Mammary epithelial cell (primary cell): ENCODE measurements at regions of chr2 and their contacts with region 1.

Region 1: DNA sequence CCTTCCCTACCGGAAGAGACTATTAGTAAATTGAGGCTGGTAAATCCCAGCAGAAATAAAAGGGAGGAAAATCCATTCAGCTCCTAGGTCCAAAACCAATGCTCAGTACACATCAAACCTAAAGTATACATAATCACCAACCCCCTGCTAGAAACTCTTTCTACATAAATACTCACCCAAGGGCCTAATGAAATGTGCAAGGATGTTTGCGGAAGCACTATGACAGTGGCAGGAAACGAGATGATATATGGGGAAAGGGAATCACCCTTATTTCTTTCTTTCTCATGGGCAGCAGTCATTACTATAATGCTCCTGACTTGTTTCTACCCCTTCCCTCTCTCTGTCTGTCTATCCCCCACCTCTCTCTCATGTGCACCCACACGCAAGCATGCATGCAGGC is 1.3 kb upstream of the SCTR start:
- DNase-seq: no peak
- H3K4me3 ChIP-seq: no peak overlapping the region
- H3K27ac ChIP-seq: no peak overlapping the region
- H3K4me1 ChIP-seq: no peaks in the 10 kb centered on the region
- H3K27me3 ChIP-seq: peaks cover 24% of the 10 kb centered on the region
- CTCF ChIP-seq: no peak

Region 2: DNA sequence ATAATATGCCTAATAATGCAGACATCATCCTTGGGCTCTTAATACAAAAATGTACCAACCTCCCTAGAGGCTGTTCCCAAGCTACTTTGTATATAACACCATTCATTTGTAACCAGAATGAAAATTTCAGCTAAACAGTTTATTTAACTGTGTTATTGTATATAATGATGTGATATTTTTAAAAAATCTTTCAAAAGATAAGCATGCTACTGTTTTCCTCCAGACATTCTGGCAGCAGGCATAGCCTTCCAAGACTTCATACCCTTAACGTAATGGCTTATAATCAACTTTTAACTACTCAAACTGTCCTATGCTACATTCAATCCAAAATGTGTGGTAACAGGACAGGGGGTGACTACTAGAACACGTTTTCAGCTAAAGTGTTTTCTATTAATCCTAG is 39.9 kb after region 1 on chr2:
- CTCF ChIA-PET with region 1: no interaction called
- dilution Hi-C with region 1: loop called (anchors 5 kb)
- in situ Hi-C with region 1: no loop called
- intact Hi-C with region 1: no loop called
- DNase-seq: no peak
- H3K4me3 ChIP-seq: no peak overlapping the region
- H3K27ac ChIP-seq: no peak overlapping the region
- H3K4me1 ChIP-seq: no peaks in the 10 kb centered on the region
- H3K27me3 ChIP-seq: no peaks in the 10 kb centered on the region
- CTCF ChIP-seq: no peak

Region 3: GRCh38 chr2:119678998-119679710 is 153.5 kb after region 1 on chr2 and contains the start of gene TMEM177:
- CTCF ChIA-PET with region 1: no interaction called
- dilution Hi-C with region 1: no loop called
- in situ Hi-C with region 1: no loop called
- intact Hi-C with region 1: no loop called
- DNase-seq: peak; percentile 80
- H3K4me3 ChIP-seq: peak within 1 kb of the TSS; percentile 84 to 100 (median 89)
- H3K27ac ChIP-seq: peak within 1 kb of the TSS; percentile 68
- H3K4me1 ChIP-seq: peaks cover 8% of the 10 kb centered on the region
- H3K27me3 ChIP-seq: no peaks in the 10 kb centered on the region
- CTCF ChIP-seq: no peak
- total RNA-seq, gene TMEM177: 11.7 to 13.3 TPM

Region 4: GRCh38 chr2:119730671-119731193 is 205.1 kb after region 1 on chr2:
- CTCF ChIA-PET with region 1: no interaction called
- dilution Hi-C with region 1: no loop called
- in situ Hi-C with region 1: no loop called
- intact Hi-C with region 1: no loop called
- DNase-seq: peak; percentile 75
- H3K4me3 ChIP-seq: no peak overlapping the region
- H3K27ac ChIP-seq: no peak overlapping the region
- H3K4me1 ChIP-seq: no peaks in the 10 kb centered on the region
- H3K27me3 ChIP-seq: no peaks in the 10 kb centered on the region
- CTCF ChIP-seq: no peak